Right ventricle myocardium inferior (tissue), 1 donor: ENCODE measurements at regions of chr3 and their contacts with region 1.

Region 1: GRCh38 chr3:184185461-184186308 is at the start of gene ABCF3:
- DNase-seq: peak; percentile 100
- ATAC-seq: peak; percentile 97
- total RNA-seq, gene ABCF3: 68.2 TPM

Region 2: DNA sequence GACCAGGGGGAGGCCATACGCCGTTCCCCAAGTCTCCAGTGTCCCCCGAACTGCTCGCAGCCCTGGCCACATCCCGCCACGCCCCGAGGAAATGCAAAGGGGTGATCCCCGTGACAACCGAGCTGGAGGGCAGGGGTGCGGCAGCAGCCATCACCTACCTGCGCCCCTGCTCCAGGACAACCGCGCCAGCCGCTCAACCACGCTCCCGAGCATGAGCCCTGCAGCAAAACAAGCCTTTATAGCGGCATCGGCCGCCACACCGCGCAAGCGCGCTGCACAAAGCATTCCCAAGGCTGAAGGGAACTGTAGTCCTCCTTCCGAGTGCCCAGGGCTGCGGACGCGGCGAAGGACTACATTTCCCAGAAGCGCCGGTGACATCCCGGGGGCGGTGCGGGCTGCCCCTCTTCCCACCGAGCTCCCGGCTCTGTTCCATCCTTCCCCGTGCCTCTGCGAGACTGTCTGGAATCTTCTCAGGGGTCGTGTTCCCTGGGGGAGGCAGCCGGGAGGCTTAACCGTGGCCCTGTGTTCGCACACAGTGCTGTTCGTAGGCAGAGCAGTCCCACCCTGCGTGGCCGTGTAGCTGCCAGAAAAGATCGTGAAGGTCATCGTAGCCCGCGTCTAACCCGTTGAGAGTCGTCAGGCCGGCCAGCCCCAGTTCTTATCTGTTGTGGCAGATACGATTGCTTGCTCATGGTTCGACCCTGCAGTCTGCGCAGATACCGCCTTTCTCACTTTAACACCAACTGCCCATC is 167.8 kb before region 1 on chr3 and contains the start of gene ABCC5:
- intact Hi-C with region 1: loop called (anchors 10 kb)
- DNase-seq: peak; percentile 97
- ATAC-seq: peak; percentile 99
- total RNA-seq, gene ABCC5: 48.2 TPM

Region 3: GRCh38 chr3:184135149-184135910 is 50.4 kb before region 1 on chr3 and contains the start of gene EIF2B5:
- intact Hi-C with region 1: loop called (anchors 1 kb)
- DNase-seq: peak; percentile 95
- ATAC-seq: peak; percentile 97
- total RNA-seq, gene EIF2B5: 32.2 TPM

Region 4: GRCh38 chr3:184154885-184155643 is 30.6 kb before region 1 on chr3 and contains the start of gene DVL3:
- intact Hi-C with region 1: loop called (anchors 2 kb)
- DNase-seq: peak; percentile 85
- ATAC-seq: peak; percentile 90
- total RNA-seq, gene DVL3: 60.7 TPM

Region 5: GRCh38 chr3:184174646-184175492 is 10.8 kb before region 1 on chr3 and contains the start of gene AP2M1:
- intact Hi-C with region 1: loop called (anchors 1 kb)
- DNase-seq: peak; percentile 99
- ATAC-seq: peak; percentile 95
- total RNA-seq, gene AP2M1: 269 TPM

Region 6: GRCh38 chr3:184250167-184250828 is 64.6 kb after region 1 on chr3:
- intact Hi-C with region 1: loop called (anchors 5 kb)
- DNase-seq: peak; percentile 87
- ATAC-seq: peak; percentile 82

Region 7: DNA sequence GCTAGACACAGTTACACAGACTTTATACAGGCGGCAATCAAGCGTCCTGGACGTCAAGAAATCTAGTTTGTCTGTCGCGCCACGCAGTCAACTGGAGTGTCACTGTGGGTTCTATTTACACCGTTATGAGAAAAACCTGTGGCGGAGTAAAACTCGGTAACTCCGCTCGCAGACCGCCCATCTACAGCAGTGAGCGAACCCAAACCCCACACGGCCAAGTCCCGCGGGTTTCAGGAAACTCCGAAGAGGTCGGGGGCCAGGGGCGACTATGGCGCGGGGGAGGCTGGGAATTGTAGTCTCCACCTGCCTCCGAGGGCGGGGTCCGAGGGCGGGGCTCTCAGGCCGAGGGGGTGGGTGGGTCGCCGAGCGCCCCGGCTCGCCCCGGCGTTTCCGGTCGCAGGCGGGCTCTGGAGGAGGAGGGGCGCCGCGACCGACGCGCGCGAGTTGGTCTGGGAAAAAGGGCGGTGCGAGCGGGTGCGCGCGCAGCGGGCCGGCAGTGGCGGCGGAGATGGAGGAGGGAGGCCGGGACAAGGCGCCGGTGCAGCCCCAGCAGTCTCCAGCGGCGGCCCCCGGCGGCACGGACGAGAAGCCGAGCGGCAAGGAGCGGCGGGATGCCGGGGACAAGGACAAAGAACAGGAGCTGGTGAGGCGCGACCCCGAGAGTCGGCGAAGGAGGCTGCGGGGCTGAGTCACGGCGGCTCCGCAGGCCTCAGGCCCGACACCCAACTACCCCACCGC is 113.2 kb after region 1 on chr3 and contains the start of gene PSMD2:
- intact Hi-C with region 1: loop called (anchors 2 kb)
- DNase-seq: peak; percentile 99
- ATAC-seq: peak; percentile 99
- total RNA-seq, gene PSMD2: 228 TPM